Transverse colon (tissue), 4 donors: ENCODE measurements at regions of chr11 and their contacts with region 1.

Region 1: DNA sequence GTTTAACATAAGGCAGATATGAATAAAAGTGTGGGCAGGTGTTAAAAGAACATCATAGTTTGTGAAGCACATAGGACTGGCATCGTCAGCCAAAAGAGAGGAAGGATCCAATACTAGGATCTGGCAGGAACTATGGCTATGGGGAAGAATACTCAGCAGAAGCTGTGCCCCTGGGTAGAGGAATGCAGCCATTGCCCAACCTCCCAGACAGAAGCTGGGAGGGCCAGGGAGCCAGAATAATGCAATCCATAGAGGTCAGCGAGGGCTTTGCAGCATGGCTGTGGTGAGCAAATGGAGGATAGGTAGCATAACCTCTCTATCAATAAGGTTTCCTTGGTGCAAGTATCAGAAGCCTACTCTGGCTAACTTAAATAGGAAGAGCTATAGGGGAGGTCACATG is 11.7 kb upstream of the CSTF3 start:
- DNase-seq: no peak
- H3K4me3 ChIP-seq: no peak overlapping the region
- H3K27ac ChIP-seq: no peak overlapping the region
- H3K4me1 ChIP-seq: peaks cover 0 to 10% (median 0%) of the 10 kb centered on the region in 4 donors
- H3K27me3 ChIP-seq: no peaks in the 10 kb centered on the region
- CTCF ChIP-seq: no peak
- EP300 ChIP-seq: no peak
- POLR2A ChIP-seq: no peak

Region 2: GRCh38 chr11:33147559-33147958 is 25.4 kb before region 1 on chr11:
- in situ Hi-C with region 1: no loop called
- intact Hi-C with region 1: no loop called
- DNase-seq: no peak
- H3K4me3 ChIP-seq: no peak overlapping the region
- H3K27ac ChIP-seq: no peak overlapping the region
- H3K4me1 ChIP-seq: peaks cover 0 to 10% (median 5%) of the 10 kb centered on the region in 4 donors
- H3K27me3 ChIP-seq: no peaks in the 10 kb centered on the region
- CTCF ChIP-seq: no peak
- EP300 ChIP-seq: no peak
- POLR2A ChIP-seq: no peak

Region 3: GRCh38 chr11:33234397-33235190 is 61.6 kb after region 1 on chr11:
- in situ Hi-C with region 1: loop called in 1 of 4 experiments (anchors 10 kb)
- intact Hi-C with region 1: no loop called
- DNase-seq: no peak
- H3K4me3 ChIP-seq: no peak overlapping the region
- H3K27ac ChIP-seq: no peak overlapping the region
- H3K4me1 ChIP-seq: no peaks in the 10 kb centered on the region
- H3K27me3 ChIP-seq: no peaks in the 10 kb centered on the region
- CTCF ChIP-seq: no peak
- EP300 ChIP-seq: no peak
- POLR2A ChIP-seq: no peak